ENCODE measurements at regions of chr7 and their contacts with region 1.

Region 1: DNA sequence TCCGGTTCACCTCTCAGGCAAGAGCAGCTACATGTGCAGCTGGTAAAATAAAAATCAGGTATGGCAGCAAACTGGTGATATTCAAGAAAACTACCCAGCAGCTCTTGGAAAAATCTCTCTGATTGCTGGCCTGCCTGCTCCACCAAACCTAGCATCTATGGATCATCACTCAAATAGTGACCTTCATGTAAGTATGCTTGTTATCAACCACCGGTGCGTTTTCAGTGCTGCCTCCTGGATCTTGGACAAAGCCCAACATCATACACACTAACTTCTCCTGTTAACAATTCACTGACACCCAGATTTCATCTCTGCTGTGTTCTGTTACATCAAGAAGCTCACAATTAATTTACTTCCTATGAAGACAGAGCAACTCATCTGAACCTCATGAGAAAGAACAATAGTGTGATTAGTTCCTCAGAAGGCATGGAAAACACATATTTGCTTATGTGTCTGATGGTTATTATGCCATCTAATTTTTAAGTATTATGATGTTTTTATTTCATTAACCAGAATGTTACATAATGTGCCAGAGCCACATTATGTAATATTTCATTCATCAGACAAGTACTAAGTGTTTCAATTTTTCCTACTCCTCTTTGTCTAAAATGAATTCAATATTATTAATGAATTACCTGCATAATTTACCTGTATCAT is 8.8 kb downstream of the CDK6 start:
- DNase-seq: no peak
- ATAC-seq: peak; percentile 2; the same call in 2 of the 3 replicates
- H3K4me3 ChIP-seq: no peak overlapping the region
- H3K27ac ChIP-seq: no peak overlapping the region
- H3K4me1 ChIP-seq: peaks cover 16% of the 10 kb centered on the region
- H3K27me3 ChIP-seq: no peaks in the 10 kb centered on the region
- CTCF ChIP-seq: no peak
- EP300 ChIP-seq: no peak
- POLR2A ChIP-seq: no peak
- RAD21 ChIP-seq: no peak

Region 2: GRCh38 chr7:92720604-92721350 is 106.8 kb before region 1 on chr7:
- CTCF ChIA-PET with region 1: interaction called, 21 read pairs
- POLR2A ChIA-PET with region 1: interaction called, 8 read pairs
- RAD21 ChIA-PET with region 1: interaction called, 21 read pairs
- SMC1A ChIA-PET with region 1: interaction called, 15 read pairs
- in situ Hi-C with region 1: no loop called
- intact Hi-C with region 1: no loop called
- DNase-seq: no peak
- ATAC-seq: peak; percentile 79
- H3K4me3 ChIP-seq: no peak overlapping the region
- H3K27ac ChIP-seq: peak overlapping the region; percentile 67
- H3K4me1 ChIP-seq: peaks cover 31% of the 10 kb centered on the region
- H3K27me3 ChIP-seq: no peaks in the 10 kb centered on the region
- CTCF ChIP-seq: peak in 1 of 3 experiments; percentile 21; a peak in 2 of 6 replicates
- EP300 ChIP-seq: 0 out of 4 replicates have a peak, but pooled peaks of 1 of the 2 experiments have one; percentile 17
- POLR2A ChIP-seq: no peak
- RAD21 ChIP-seq: peak; percentile 65

Region 3: DNA sequence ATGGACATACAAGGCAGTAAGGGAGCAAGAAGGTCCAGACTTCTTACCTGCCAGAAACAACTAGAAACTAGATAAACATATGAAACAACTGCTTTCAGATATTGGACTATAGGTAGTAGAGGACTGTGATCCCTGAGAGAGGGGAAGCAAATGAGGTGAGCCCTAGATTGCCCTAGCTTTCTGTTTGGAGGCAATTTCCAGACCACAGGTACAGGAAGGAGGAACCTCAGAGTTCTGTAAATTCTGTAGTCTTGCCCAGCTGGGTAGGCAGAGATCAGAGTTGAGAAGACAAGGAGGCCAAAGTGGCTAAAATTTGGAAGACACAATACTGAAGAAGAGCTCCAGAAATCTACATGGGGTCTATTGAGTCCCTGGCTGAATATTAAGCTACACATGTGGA is 12.2 kb before region 1 on chr7:
- CTCF ChIA-PET with region 1: interaction called, 21 read pairs
- POLR2A ChIA-PET with region 1: interaction called, 37 read pairs
- RAD21 ChIA-PET with region 1: interaction called, 124 read pairs
- SMC1A ChIA-PET with region 1: interaction called, 83 read pairs
- in situ Hi-C with region 1: no loop called
- intact Hi-C with region 1: no loop called
- DNase-seq: no peak
- ATAC-seq: peak; percentile 15
- H3K4me3 ChIP-seq: no peak overlapping the region
- H3K27ac ChIP-seq: peak overlapping the region; percentile 1; the same call in 1 of the 2 replicates
- H3K4me1 ChIP-seq: peaks cover 32% of the 10 kb centered on the region
- H3K27me3 ChIP-seq: no peaks in the 10 kb centered on the region
- CTCF ChIP-seq: no peak
- EP300 ChIP-seq: no peak
- POLR2A ChIP-seq: no peak
- RAD21 ChIP-seq: no peak

Region 4: DNA sequence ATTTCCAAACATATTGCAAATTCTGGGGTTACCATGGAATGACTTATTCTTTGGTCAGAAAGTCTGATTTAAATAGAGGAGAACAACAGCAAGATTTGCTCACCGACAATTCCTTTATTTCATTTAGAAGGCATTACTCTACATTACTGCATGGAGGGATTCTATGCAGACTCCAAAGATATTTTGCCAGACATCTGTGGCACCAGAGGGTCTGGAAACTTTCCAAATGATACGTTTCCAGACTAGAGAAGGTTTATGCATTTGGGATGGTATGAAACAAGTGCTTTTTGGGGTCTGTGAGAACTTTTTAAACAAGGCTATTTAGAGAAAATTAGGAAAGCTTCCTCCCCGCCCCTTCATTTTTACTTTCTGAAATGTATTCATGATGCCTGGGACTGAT is 164.9 kb after region 1 on chr7:
- CTCF ChIA-PET with region 1: no interaction called
- POLR2A ChIA-PET with region 1: no interaction called
- RAD21 ChIA-PET with region 1: no interaction called
- SMC1A ChIA-PET with region 1: no interaction called
- in situ Hi-C with region 1: no loop called
- intact Hi-C with region 1: no loop called
- DNase-seq: no peak
- ATAC-seq: no peak
- H3K4me3 ChIP-seq: no peak overlapping the region
- H3K27ac ChIP-seq: no peak overlapping the region
- H3K4me1 ChIP-seq: no peaks in the 10 kb centered on the region
- H3K27me3 ChIP-seq: no peaks in the 10 kb centered on the region
- CTCF ChIP-seq: no peak
- EP300 ChIP-seq: no peak
- POLR2A ChIP-seq: no peak
- RAD21 ChIP-seq: no peak

Measured in GM12878 (cell line).